ENCODE measurements at regions of chr3 and their contacts with region 1.

Region 1: GRCh38 chr3:154943981-154944380 is 136.1 kb upstream of the MME start:
- DNase-seq: no peak
- H3K4me3 ChIP-seq: no peak overlapping the region
- CTCF ChIP-seq: no peak
- POLR2A ChIP-seq: no peak

Region 2: DNA sequence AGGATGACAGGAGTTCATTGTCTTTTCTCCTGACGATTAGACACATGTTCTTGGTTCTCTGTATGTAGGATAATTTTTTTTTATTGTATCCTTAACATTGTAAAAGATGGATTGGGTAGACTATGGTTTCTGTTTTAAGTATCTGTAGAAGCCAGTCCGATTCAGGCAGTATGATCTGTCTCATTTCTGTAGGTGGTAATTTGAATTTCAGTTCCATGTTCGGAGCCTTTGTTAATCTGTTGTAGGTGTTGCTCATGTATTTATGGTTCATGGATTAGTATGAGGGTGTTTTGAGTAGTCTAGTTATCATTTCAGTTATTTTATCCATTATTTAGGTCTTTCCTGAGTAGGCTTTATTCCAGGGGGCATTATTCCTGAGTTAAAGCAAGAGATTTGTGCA is 103.7 kb after region 1 on chr3:
- intact Hi-C with region 1: no loop called
- DNase-seq: no peak
- H3K4me3 ChIP-seq: no peak overlapping the region
- CTCF ChIP-seq: no peak
- POLR2A ChIP-seq: no peak

Region 3: GRCh38 chr3:155554777-155555451 is 610.9 kb after region 1 on chr3:
- intact Hi-C with region 1: loop called (anchors 5 kb)
- DNase-seq: no peak
- H3K4me3 ChIP-seq: no peak overlapping the region
- CTCF ChIP-seq: no peak
- POLR2A ChIP-seq: no peak